ENCODE measurements at regions of chr15 and their contacts with region 1.

Region 1: DNA sequence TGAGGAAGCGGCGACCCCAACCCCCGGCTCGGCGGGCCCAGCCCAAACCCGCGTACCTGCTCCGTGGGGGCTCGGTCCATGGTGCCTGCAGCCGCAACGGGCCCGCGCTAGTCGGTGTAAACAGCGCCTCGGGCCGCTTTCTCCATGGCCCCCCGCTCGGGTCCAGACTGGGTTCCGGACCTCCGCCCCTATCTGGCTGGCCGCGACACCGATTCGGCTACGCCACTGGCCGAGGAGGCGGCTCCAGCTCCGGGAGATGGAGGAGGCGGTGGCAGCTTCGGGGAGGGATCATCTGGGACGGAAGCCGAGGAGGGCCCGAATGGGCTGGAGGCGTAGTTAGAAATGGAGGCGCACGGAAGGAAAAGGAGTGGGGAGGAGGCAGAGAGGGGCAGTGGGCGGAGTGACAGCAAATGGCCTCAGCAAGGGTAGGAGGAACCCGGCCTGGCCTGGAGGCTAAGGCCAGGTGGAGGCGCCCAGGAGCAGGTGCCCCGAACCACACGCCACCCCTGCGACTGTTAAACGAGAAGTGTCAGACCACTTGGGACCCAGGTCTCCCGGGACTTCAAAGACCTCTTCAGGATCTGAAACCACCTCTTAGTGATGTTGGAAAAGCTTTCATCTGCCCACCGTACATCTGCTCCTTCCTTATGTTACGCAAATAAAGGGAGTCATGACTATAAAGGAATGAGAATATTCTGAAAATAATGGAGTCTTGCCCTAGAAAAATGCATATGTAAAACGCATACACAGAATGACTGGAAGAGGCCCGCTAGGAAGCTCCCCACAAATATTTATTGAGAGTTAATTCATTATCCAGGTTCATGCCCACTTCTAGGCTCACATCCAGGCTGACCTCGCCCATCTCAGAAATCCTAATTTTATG is at the start of gene SECISBP2L:
- DNase-seq: peak; percentile 74 to 96
- H3K4me3 ChIP-seq: peak within 1 kb of the TSS; percentile 76 to 78
- H3K27ac ChIP-seq: peak within 1 kb of the TSS; percentile 74 to 85
- H3K4me1 ChIP-seq: peaks cover under 1 to 14% of the 10 kb centered on the region in 2 donors
- H3K27me3 ChIP-seq: no peaks in the 10 kb centered on the region
- CTCF ChIP-seq: peak in 1 of 3 experiments; percentile 18
- total RNA-seq, gene SECISBP2L: 9.7 TPM

Region 2: GRCh38 chr15:48794697-48795134 is 251.7 kb before region 1 on chr15:
- intact Hi-C with region 1: no loop called
- DNase-seq: no peak
- H3K4me3 ChIP-seq: no peak overlapping the region
- H3K27ac ChIP-seq: no peak overlapping the region
- H3K4me1 ChIP-seq: no peaks in the 10 kb centered on the region
- H3K27me3 ChIP-seq: no peaks in the 10 kb centered on the region
- CTCF ChIP-seq: no peak

Region 3: GRCh38 chr15:48877630-48878595 is 168.5 kb before region 1 on chr15 and contains the start of gene EID1:
- intact Hi-C with region 1: loop called (anchors 1 kb)
- DNase-seq: peak; percentile 77 to 97
- H3K4me3 ChIP-seq: peak within 1 kb of the TSS; percentile 77 to 81
- H3K27ac ChIP-seq: peak within 1 kb of the TSS; percentile 77 to 82
- H3K4me1 ChIP-seq: peaks cover 5 to 8% of the 10 kb centered on the region in 2 donors
- H3K27me3 ChIP-seq: no peaks in the 10 kb centered on the region
- CTCF ChIP-seq: peak in 1 of 3 experiments; percentile 4
- total RNA-seq, gene EID1: 247 TPM

Region 4: GRCh38 chr15:48963524-48964113 is 82.8 kb before region 1 on chr15 and contains the start of gene SHC4:
- intact Hi-C with region 1: loop called (anchors 5 kb)
- DNase-seq: peak in 1 of 2 donors; percentile 77
- H3K4me3 ChIP-seq: peak within 1 kb of the TSS; percentile 73
- H3K27ac ChIP-seq: peak within 1 kb of the TSS; percentile 57 to 71
- H3K4me1 ChIP-seq: peaks cover 4 to 20% of the 10 kb centered on the region in 2 donors
- H3K27me3 ChIP-seq: no peaks in the 10 kb centered on the region
- CTCF ChIP-seq: peak in 1 of 3 experiments; percentile 10
- total RNA-seq, gene SHC4: 7.2 TPM

Region 5: GRCh38 chr15:48984811-48985352 is 61.6 kb before region 1 on chr15:
- intact Hi-C with region 1: loop called (anchors 5 kb)
- DNase-seq: peak in 1 of 2 donors; percentile 69
- H3K4me3 ChIP-seq: no peak overlapping the region
- H3K27ac ChIP-seq: peak overlapping the region; percentile 78 to 82
- H3K4me1 ChIP-seq: peaks cover 4 to 31% of the 10 kb centered on the region in 2 donors
- H3K27me3 ChIP-seq: no peaks in the 10 kb centered on the region
- CTCF ChIP-seq: no peak

Region 6: GRCh38 chr15:49135893-49136292 is 89.4 kb after region 1 on chr15:
- intact Hi-C with region 1: no loop called
- DNase-seq: no peak
- H3K4me3 ChIP-seq: no peak overlapping the region
- H3K27ac ChIP-seq: no peak overlapping the region
- H3K4me1 ChIP-seq: no peaks in the 10 kb centered on the region
- H3K27me3 ChIP-seq: no peaks in the 10 kb centered on the region
- CTCF ChIP-seq: no peak

Region 7: GRCh38 chr15:49145651-49146609 is 99.5 kb after region 1 on chr15:
- intact Hi-C with region 1: loop called (anchors 5 kb)
- DNase-seq: no peak
- H3K4me3 ChIP-seq: no peak overlapping the region
- H3K27ac ChIP-seq: no peak overlapping the region
- H3K4me1 ChIP-seq: peaks cover 0 to 14% of the 10 kb centered on the region in 2 donors
- H3K27me3 ChIP-seq: no peaks in the 10 kb centered on the region
- CTCF ChIP-seq: peak; percentile 22 to 73 (median 59)